HEK293T (cell line): ENCODE measurements at regions of chr15 and their contacts with region 1.

Region 1: GRCh38 chr15:74763416-74763815 is 14.8 kb downstream of the CYP1A2 start:
- DNase-seq: no peak

Region 2: DNA sequence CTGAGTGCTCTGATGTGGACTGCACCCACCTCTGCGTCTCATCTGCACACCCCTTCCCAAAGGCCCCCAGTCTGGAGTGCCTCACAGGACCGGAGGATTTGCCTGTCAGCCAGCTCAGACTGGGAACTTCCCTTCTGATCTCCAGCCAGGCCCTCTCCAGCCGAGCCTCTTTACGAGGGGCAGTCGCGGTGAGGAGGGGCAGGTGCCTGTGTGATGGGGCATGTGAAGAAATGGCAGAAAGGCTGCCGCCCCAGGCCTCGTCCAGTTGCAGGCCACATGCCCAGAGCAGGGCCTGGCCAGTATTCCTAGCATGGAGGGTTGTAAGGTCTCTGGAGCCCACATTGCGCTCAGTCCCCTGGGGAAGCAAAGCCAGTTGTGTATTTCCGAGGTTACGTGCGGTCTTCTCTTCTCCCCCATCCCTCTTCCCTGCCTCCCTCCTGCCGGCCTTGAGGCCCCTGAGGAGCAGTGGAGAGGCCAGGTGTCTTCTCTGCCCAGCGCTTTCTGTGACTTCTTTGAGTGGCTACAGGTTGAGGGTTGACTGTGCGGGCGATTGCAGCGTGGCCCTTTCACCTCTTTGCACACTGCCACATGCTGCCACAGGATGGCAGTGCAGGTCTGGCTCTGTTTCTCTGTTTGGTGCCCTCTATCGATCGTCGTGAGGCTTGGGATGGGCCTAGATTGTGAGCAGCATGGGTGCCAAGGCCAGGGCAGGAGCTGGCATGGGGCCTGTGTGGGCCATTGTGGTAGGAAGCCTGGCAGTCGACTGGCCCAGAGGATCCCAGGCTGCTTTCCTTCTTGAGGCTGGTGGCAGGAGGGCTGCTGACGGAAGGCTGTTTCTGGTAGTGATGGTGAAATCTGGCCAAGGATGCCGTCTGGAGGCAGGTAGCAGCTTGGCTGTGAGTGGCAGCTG is 142.5 kb before region 1 on chr15:
- CTCF ChIA-PET with region 1: interaction called, 14 read pairs
- POLR2A ChIA-PET with region 1: interaction called, 12 read pairs
- DNase-seq: peak; percentile 83

Region 3: GRCh38 chr15:74635228-74635627 is 128.2 kb before region 1 on chr15:
- CTCF ChIA-PET with region 1: interaction called, 205 read pairs
- POLR2A ChIA-PET with region 1: interaction called, 28 read pairs
- DNase-seq: peak; percentile 83

Region 4: DNA sequence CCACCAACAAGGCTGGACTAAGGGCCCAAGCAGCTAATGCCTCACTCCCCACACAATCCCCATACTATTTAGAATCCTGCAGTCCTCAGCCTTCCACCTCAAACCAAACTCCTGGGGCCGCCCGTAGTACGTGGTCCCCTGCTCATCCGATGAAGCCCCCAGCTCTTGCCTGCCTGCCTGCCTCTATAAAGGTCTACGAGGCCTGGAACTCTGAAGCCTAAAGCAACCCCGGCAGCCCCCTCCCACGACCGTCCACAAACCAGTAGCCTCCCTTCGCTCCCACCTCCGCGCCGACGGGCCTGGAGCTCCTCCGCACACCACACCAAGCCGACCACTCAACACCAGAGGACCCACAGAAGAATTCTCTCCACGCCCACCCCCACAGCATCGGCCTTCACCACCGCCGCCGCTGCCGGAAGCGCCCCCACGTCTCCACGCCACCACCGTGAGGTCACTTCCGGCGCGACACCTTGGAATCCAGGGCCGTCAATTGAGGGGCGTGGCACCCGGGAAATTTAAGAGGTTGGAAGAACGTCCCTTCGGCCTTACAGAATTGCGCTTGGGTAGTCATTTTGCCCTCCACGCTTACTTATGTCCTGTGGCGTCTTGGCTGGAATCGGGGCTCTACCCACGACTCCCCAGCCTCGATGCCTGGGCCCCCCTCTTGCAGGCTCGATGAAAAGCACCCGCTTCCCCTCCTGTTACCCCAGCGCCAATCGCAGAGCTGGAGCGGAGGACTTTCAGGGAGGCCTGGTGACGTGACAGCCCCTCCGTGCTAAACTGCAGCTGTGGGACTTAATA is 67.6 kb before region 1 on chr15 and contains the start of gene EDC3:
- CTCF ChIA-PET with region 1: interaction called, 3 read pairs
- POLR2A ChIA-PET with region 1: interaction called, 21 read pairs
- DNase-seq: peak; percentile 95

Region 5: GRCh38 chr15:74723754-74724334 is 39.6 kb before region 1 on chr15:
- CTCF ChIA-PET with region 1: interaction called, 14 read pairs
- POLR2A ChIA-PET with region 1: interaction called, 37 read pairs
- DNase-seq: peak; percentile 72

Region 6: DNA sequence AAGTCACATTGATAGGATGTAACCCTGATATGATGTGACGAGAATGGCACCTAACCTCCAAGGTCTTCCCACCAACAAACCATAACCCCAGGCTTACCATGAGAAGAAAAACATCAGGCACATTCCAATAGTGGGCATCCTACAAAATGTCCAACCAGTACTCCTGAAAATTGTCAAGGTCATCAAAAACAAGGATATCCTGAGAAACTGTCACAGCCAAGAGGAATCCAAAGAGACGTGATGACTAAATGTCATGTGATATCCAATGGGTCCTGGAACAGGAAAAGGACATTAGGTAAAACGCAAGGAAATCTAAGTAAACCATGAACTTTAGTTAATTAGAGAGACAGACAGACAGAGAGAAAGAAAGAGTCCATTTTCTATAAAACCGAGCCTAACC is 17.0 kb before region 1 on chr15:
- CTCF ChIA-PET with region 1: interaction called, 3 read pairs
- POLR2A ChIA-PET with region 1: interaction called, 31 read pairs
- DNase-seq: no peak

Region 7: GRCh38 chr15:74752491-74753020 is 10.9 kb before region 1 on chr15:
- CTCF ChIA-PET with region 1: interaction called, 42 read pairs
- POLR2A ChIA-PET with region 1: interaction called, 31 read pairs
- DNase-seq: no peak